Caco-2 (cell line): ENCODE measurements at regions of chr20 and their contacts with region 1.

Region 1: GRCh38 chr20:53578492-53579222 is 15.0 kb downstream of the ZNF217 start:
- DNase-seq: peak; percentile 80 to 93
- H3K4me3 ChIP-seq: no peak overlapping the region
- H3K4me3 Mint-ChIP-seq: peak overlapping the region; percentile 23
- H3K27ac Mint-ChIP-seq: peak overlapping the region; percentile 78
- H3K4me1 ChIP-seq: peaks cover 39% of the 10 kb centered on the region
- H3K4me1 Mint-ChIP-seq: peaks cover 26% of the 10 kb centered on the region
- H3K27me3 ChIP-seq: no peaks in the 10 kb centered on the region
- H3K27me3 Mint-ChIP-seq: no peaks in the 10 kb centered on the region
- CTCF ChIP-seq: peak; percentile 98 to 99

Region 2: DNA sequence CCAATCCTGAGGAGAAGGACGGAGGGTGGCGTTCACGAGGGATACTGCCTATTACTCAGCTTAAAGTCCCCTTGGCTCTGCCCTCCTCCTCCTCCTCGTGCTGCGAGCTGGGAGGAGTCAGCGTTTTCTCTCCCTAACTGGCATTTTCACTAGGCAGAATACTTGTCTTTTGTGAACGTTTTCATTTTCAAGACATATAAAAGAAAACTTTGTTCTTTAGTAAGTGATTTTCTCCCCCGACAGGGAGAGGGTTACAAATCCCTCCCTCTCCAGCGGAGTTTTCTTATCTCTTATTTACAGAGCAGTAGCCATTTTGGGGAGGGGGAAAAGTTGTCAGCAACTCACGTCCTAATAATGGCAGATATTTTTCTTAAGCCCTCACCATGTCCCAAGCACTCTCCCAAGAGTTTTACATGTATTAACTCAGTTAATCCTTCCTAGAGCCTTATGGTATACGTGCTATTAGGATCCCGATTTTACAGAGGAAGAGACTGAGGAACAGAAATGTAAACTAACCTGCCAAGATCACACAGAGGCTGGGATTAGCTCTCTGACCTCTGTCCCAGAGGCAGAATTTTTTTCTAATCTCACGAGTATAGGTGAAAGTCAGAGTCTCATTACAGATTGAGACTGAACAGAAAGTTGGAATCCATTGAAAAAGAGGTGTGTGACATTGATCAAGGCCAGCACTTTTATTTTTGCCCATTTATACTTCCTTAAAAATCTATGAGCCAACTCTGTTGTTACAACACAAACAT is 45.0 kb after region 1 on chr20:
- CTCF ChIA-PET with region 1: interaction called, 3 read pairs
- POLR2A ChIA-PET with region 1: no interaction called
- intact Hi-C with region 1: loop called (anchors 1 kb)
- DNase-seq: peak; percentile 86 to 89
- H3K4me3 ChIP-seq: peak overlapping the region; percentile 41
- H3K4me3 Mint-ChIP-seq: peak overlapping the region; percentile 83
- H3K27ac Mint-ChIP-seq: peak overlapping the region; percentile 97
- H3K4me1 ChIP-seq: peaks cover 33% of the 10 kb centered on the region
- H3K4me1 Mint-ChIP-seq: peaks cover 24% of the 10 kb centered on the region
- H3K27me3 ChIP-seq: no peaks in the 10 kb centered on the region
- H3K27me3 Mint-ChIP-seq: no peaks in the 10 kb centered on the region
- CTCF ChIP-seq: peak in 1 of 2 experiments; percentile 35

Region 3: DNA sequence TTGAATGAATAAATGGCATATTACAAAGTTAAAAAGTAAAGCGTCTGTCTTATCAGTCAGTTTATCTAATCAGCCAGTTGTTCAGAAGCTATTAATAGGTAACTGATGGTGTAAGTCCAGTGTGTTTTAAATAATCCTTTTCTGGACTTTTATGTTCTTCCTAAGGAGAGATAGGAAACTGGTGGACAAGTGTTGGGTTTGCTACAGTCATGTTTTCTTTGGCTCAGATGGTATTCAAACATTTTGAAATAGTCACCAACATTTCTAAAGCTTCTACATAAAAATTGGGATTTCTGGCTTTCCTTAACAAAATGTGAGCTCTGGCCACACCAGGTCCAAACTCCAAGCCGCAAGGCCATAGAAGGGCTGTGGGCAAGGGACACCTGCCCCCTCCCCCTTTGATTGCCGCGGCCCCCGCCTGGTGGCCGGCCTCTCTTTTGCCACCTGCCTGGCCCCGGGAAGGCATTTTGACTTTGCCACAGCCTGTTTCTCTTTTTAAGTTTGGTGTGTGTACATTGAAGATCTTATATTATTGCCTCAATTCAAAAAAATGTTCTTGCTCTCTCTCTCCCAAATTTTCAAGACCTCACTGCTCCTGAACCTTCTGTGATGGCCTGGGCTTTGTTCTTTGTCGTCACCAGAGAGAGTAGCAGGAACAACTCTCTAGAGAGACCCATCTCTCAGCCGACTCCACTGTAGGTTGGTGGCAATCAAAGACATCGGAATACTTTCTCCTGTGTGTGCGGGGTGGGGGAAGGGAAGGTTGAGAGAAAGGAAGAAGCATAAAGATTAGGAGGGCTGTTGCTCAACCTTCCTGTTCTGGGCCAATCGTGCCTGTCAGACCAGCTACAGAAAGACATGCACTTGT is 99.0 kb after region 1 on chr20:
- CTCF ChIA-PET with region 1: interaction called, 6 read pairs
- POLR2A ChIA-PET with region 1: no interaction called
- intact Hi-C with region 1: loop called (anchors 1 kb)
- DNase-seq: peak; percentile 97 to 99
- H3K4me3 ChIP-seq: peak overlapping the region; percentile 2; the same call in 1 of the 2 replicates
- H3K4me3 Mint-ChIP-seq: peak overlapping the region; percentile 73
- H3K27ac Mint-ChIP-seq: peak overlapping the region; percentile 88
- H3K4me1 ChIP-seq: peaks cover 52% of the 10 kb centered on the region
- H3K4me1 Mint-ChIP-seq: peaks cover 43% of the 10 kb centered on the region
- H3K27me3 ChIP-seq: no peaks in the 10 kb centered on the region
- H3K27me3 Mint-ChIP-seq: no peaks in the 10 kb centered on the region
- CTCF ChIP-seq: peak; percentile 76 to 84

Region 4: DNA sequence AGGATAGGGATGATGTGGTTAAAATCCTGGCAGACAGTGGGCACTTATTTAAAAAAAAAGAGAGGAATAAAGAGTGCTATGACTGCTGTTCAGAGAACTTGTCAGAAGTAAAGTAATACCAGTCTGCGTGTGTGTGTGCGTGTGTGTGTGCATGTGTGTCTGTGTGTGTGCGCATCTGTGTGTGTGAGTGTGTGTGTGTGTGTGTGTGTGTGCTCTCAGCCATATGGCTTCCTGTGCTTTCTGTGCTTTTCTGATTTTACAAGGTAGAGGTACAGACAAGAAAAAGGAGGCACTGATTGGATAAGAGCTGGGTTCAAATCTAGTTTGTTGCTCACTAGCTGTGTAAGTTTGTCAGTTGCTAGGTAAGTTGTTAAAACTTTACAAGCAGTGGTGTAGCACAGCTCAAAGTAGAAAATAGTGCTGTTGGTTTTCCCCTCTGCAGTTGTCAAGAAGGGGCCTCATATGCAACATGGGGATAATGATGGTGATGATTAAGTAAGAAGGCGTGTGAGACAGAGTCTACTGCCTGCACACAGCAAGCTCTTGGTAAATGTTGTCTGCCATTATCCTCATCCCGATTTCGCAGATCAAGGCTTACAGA is 170.3 kb after region 1 on chr20:
- CTCF ChIA-PET with region 1: interaction called, 3 read pairs
- POLR2A ChIA-PET with region 1: no interaction called
- intact Hi-C with region 1: loop called (anchors 2 kb)
- DNase-seq: no peak
- H3K4me3 ChIP-seq: no peak overlapping the region
- H3K4me3 Mint-ChIP-seq: no peak overlapping the region
- H3K27ac Mint-ChIP-seq: peak overlapping the region; percentile 91
- H3K4me1 ChIP-seq: peaks cover 55% of the 10 kb centered on the region
- H3K4me1 Mint-ChIP-seq: peaks cover 56% of the 10 kb centered on the region
- H3K27me3 ChIP-seq: no peaks in the 10 kb centered on the region
- H3K27me3 Mint-ChIP-seq: no peaks in the 10 kb centered on the region
- CTCF ChIP-seq: no peak

Region 5: GRCh38 chr20:53800808-53801604 is 222.3 kb after region 1 on chr20:
- CTCF ChIA-PET with region 1: no interaction called
- POLR2A ChIA-PET with region 1: no interaction called
- intact Hi-C with region 1: loop called (anchors 1 kb)
- DNase-seq: peak; percentile 97 to 99
- H3K4me3 ChIP-seq: peak overlapping the region; percentile 21
- H3K4me3 Mint-ChIP-seq: peak overlapping the region; percentile 74
- H3K27ac Mint-ChIP-seq: peak overlapping the region; percentile 95
- H3K4me1 ChIP-seq: peaks cover 54% of the 10 kb centered on the region
- H3K4me1 Mint-ChIP-seq: peaks cover 67% of the 10 kb centered on the region
- H3K27me3 ChIP-seq: no peaks in the 10 kb centered on the region
- H3K27me3 Mint-ChIP-seq: no peaks in the 10 kb centered on the region
- CTCF ChIP-seq: no peak

Region 6: DNA sequence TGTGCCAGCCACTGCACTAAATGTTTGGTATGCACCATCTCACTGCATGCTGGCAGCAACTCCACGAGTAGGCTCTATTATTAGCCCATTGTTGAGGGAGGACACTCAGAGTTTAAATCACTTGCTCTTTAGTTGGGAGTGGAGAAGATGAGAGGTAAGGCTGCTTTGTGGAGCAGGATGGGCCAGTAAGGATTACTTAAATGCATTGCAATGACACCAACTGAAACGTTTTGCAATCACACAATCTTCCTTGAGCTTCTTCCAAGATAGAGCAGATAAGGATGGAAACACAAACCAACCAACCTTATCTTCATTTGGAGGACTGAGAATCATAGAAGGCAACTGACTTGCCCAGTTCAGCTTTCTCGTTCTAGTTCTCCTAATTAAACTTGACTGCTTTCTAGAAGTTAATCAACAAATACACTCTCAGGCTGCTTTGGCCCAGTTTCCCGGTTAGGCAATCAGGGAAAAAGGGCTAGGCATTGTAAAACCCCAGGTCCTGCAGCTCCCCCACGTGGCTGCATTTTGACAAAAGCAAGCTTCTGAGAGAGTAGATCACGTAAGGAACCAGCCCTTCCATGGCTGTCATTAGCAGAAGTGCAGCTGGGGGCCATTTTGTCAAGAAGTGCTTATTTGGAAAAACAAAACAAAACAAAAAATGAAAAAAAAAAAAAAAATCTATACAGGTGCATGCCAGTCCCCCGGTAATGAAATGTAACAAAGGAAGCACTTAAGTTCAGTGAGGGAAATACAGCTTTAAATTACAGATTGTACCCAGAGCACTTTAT is 361.1 kb after region 1 on chr20:
- CTCF ChIA-PET with region 1: interaction called, 23 read pairs
- POLR2A ChIA-PET with region 1: no interaction called
- intact Hi-C with region 1: loop called (anchors 1 kb)
- DNase-seq: peak; percentile 95 to 96
- H3K4me3 ChIP-seq: no peak overlapping the region
- H3K4me3 Mint-ChIP-seq: no peak overlapping the region
- H3K27ac Mint-ChIP-seq: no peak overlapping the region
- H3K4me1 ChIP-seq: peaks cover 30% of the 10 kb centered on the region
- H3K4me1 Mint-ChIP-seq: peaks cover 35% of the 10 kb centered on the region
- H3K27me3 ChIP-seq: no peaks in the 10 kb centered on the region; the same call in 1 of the 2 replicates
- H3K27me3 Mint-ChIP-seq: no peaks in the 10 kb centered on the region
- CTCF ChIP-seq: peak; percentile 93 to 98